Right ventricle myocardium inferior (tissue), 1 donor: ENCODE measurements at regions of chr5 and their contacts with region 1.

Region 1: DNA sequence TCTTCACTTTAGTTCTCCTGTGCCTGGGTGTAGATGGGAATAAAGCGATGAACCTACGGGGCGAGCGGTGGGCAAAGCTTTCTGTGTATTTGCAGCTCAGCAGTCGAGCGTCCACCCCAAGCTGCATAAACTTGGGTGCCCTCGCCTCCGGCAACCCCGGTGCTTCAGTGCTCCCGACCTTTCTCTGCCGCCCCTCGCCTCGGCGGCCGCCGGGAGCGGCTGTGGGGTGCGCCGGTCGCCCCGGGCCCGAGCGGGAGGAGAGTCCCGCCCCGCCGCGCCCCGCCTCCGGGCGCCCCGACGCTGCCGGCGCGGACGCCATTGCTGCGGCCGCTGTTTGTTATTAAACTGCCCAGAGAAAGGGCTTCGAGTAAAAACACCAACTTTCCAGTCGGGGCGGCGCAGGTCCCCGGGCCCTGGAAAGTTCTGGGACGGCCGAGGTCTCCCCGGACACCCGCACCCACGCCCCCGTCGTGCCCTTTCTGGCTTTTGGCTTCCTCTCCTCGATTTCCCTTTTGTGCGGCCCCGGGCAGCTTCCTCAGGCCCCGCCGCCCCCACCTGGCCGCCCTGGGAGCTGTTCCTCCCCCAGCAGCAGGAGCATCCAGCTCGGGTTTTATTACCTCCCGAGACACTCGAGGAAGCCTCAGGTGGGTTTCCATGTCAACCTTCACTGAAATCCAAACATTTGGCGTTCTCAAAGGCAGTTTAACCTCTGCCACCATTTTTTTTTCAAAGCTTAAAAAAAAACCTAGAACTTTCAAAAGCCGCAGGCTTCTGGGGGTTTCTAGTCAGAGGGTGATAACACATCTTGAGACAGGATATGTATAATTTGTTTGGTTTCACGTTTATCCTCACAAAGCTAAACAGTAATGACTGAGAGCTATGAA is 334.3 kb downstream of the CWC27 start:
- DNase-seq: peak; percentile 78
- ATAC-seq: peak; percentile 83

Region 2: DNA sequence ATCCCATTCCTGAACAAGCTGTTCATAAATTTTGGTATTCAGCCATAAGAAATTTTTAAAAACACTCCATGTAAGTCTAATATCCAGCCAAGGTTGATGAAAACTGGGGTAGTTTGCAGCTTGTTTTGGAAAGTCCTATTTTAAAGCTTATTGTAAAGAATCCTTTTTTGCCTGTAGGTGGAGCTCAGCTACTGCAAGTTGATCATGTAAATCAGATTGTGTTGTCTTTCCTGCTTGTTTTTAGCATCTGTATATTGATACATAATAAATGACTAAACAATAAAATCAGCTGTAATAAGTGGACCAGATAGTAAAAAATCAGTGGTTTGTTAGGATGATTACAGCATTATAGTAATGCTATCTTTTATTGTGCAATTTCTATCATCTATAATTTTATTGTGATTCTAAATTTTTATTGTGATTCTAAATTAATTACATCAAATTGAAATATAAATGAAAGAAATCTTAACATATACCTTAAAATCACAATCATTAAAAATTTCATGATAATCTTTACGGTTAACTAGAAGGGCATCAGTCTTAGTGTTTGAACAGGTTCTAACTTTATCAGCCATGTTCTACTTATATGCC is 291.9 kb before region 1 on chr5:
- intact Hi-C with region 1: loop called (anchors 5 kb)
- DNase-seq: no peak
- ATAC-seq: no peak

Region 3: GRCh38 chr5:64958757-64959391 is 144.2 kb before region 1 on chr5:
- intact Hi-C with region 1: loop called (anchors 5 kb)
- DNase-seq: no peak
- ATAC-seq: no peak

Region 4: GRCh38 chr5:65035211-65036206 is 67.6 kb before region 1 on chr5:
- intact Hi-C with region 1: loop called (anchors 5 kb)
- DNase-seq: peak; percentile 93
- ATAC-seq: peak; percentile 96

Region 5: DNA sequence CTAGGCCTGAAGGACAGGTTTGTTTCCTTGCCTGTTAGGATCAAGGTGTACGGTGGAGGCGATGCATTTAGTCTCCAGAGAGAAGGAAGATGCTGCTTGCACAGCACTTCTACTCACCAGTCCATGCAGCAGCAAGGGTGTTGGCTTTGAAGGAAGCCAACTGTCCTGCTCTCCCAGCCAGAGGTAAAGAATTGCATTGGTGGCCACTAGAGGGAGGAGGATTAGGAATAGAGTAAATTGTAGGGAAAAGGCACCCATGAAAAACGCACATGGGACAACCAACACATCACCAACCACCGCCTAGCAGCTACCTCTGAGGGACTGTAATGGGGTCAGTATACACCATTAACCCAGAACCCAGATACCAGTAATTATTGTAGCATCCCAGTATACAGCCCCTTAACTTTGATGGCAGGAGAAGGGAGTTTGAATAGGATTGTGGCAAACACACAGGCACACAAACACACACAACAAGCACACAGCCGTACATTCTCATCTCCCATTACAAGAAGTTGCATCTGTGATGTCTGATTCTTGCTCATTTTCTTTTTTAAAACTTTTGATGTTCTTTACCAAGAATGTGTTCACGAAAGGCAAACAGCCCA is 111.0 kb after region 1 on chr5:
- intact Hi-C with region 1: loop called (anchors 5 kb)
- DNase-seq: no peak
- ATAC-seq: peak; percentile 50